Activated CD8-positive, alpha-beta memory T cell treated with anti-CD3 and anti-CD28 coated beads, Interleukin-2, amount 10 ng/mL, durations not matched to agents 7 days and 5 days (primary cell): ENCODE measurements at regions of chr15 and their contacts with region 1.

Region 1: DNA sequence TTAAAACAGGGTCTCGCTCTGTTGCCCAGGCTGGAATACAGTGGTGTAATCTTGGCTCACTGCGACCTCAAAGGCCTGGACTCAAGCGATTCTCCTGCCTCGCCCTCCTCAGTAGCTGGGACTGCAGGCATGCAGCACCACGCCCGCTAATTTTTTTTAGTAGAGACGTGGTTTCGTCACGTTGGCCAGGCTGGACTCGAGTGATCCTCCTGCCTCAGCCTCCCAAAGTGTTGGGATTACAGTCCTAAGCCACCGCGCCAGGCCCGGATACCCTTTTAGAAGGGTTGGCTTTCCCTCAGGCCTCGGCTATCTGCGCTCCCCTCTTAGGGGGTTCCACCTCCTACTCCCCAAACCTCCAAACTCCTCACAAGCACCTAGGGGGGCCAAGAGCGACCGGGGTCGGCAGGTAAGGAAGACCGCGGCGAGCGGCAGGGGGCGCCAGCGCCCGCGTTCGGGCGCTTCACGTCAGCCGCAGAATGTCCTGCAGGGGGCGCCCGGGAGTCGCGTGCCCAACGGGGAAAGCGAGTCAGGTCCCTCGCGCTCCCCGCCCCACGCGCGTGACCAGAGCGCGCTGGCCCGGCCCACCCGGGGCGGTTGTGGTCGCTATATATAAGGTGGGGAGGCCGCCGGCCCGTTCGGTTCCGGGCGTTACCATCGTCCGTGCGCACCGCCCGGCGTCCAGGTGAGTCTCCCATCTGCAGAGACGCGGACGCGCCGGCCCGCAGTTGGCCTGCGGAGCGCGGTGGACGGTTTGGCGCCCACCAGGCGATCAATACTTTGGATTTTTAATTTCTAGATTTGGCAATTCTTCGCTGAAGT is 51.8 kb upstream of the GATM start:
- DNase-seq: peak; percentile 86
- ATAC-seq: peak; percentile 95
- H3K4me3 Mint-ChIP-seq: peak overlapping the region; percentile 58
- H3K27ac Mint-ChIP-seq: no peak overlapping the region
- H3K4me1 Mint-ChIP-seq: peaks cover 5% of the 10 kb centered on the region
- H3K27me3 Mint-ChIP-seq: peaks cover 29% of the 10 kb centered on the region

Region 2: GRCh38 chr15:45414215-45414885 is 15.8 kb before region 1 on chr15:
- CTCF ChIA-PET with region 1: interaction called, 45 read pairs
- DNase-seq: peak; percentile 55
- ATAC-seq: peak; percentile 69
- H3K4me3 Mint-ChIP-seq: no peak overlapping the region
- H3K27ac Mint-ChIP-seq: peak overlapping the region; percentile 65
- H3K4me1 Mint-ChIP-seq: peaks cover 25% of the 10 kb centered on the region
- H3K27me3 Mint-ChIP-seq: no peaks in the 10 kb centered on the region

Region 3: DNA sequence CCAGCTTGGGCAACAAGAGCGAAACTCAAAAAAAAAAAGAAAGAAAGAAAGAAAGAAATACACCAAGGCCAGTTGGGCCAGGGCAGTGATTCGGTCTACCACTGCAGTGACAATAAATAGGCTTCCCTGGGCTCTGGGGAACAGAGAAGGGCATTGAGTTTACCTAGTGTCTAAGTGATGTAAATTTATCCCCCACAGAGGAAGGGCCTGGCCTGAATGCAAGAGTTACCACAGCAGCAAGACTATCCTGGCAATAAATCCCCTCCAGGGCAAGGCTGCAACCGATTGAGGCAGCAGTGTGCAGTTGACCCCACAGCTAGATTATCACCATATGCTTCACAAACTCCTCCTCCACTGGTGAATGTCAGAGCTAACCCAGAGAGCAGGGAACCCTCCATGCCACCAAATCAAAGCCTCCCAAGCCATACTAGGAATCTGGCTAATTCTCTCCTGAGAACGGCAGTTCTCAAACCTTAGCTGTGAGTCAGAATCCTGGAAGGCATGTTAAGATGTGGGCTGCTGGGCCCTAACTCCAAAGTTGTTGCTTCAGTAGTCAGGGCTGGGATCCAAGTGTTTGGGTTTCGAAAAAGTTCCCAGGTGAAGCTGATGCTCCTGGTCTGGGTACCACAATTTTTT is 12.4 kb after region 1 on chr15:
- CTCF ChIA-PET with region 1: interaction called, 11 read pairs
- DNase-seq: no peak
- ATAC-seq: no peak
- H3K4me3 Mint-ChIP-seq: no peak overlapping the region
- H3K27ac Mint-ChIP-seq: no peak overlapping the region
- H3K4me1 Mint-ChIP-seq: no peaks in the 10 kb centered on the region
- H3K27me3 Mint-ChIP-seq: no peaks in the 10 kb centered on the region

Region 4: DNA sequence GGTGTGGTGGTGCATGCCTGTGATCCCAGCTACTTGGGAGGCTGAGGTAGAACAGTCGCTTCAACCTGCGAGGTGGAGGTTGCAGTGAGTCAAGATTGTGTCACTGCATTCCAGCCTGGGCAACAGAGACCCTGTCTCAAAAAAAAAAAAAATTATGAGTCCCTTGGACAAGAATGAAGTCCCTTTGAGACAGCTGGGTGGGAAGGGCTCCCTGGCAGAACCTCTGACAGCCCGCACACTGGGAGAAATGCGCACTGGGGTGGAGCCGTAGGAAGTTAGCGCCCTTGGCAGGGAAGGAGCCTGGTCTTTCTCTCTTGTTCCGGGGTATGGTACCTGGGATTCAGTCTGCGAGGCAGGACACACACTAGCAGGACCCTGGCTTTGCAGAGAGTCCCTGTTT is 41.0 kb after region 1 on chr15:
- CTCF ChIA-PET with region 1: interaction called, 15 read pairs
- DNase-seq: no peak
- ATAC-seq: no peak
- H3K4me3 Mint-ChIP-seq: no peak overlapping the region
- H3K27ac Mint-ChIP-seq: no peak overlapping the region
- H3K4me1 Mint-ChIP-seq: peaks cover 4% of the 10 kb centered on the region
- H3K27me3 Mint-ChIP-seq: peaks cover 33% of the 10 kb centered on the region